ENCODE measurements at regions of chr5 and their contacts with region 1.

Region 1: DNA sequence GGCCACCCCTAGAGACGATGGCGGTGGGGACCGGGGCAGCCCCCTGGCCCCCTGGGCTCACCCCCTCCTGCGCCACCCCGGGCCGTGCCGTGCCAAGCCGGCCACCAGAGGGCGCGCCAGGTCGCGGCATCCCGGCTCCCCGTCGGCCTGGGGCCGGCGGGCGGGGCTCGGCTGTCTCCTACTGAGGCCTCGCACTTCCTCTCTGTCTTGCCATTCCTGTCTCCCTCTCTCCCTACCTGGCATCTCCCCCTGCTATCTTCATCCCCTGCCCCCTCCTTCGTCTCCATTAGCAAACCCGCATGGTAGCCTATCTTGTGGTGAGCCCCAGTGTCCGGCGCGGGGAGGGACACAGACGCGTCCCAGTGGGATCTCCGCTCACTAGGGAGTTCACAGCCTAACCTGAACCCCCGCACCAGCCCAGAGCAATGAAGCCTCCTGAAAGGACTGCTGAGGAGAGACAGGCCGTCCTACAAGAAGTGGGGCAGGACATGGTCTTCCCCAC is 29.8 kb upstream of the FABP6 start:
- DNase-seq: peak; percentile 53 to 77
- ATAC-seq: peak; percentile 94 to 99
- H3K4me3 ChIP-seq: peak overlapping the region; percentile 35
- H3K27ac ChIP-seq: peak overlapping the region; percentile 75 to 86
- H3K4me1 ChIP-seq: no peaks in the 10 kb centered on the region
- CTCF ChIP-seq: peak; percentile 98
- EP300 ChIP-seq: no peak
- POLR2A ChIP-seq: peak; percentile 12; the same call in 1 of the 2 replicates
- RAD21 ChIP-seq: peak; percentile 77 to 96

Region 2: GRCh38 chr5:160030631-160031377 is 168.7 kb before region 1 on chr5:
- CTCF ChIA-PET with region 1: no interaction called
- POLR2A ChIA-PET with region 1: no interaction called
- DNase-seq: no peak
- ATAC-seq: no peak
- H3K4me3 ChIP-seq: no peak overlapping the region
- H3K27ac ChIP-seq: no peak overlapping the region
- H3K4me1 ChIP-seq: no peaks in the 10 kb centered on the region
- CTCF ChIP-seq: no peak
- EP300 ChIP-seq: no peak
- POLR2A ChIP-seq: no peak
- RAD21 ChIP-seq: no peak

Region 3: GRCh38 chr5:160188142-160189015 is 11.1 kb before region 1 on chr5:
- CTCF ChIA-PET with region 1: interaction called, 25 read pairs
- POLR2A ChIA-PET with region 1: no interaction called
- DNase-seq: peak; percentile 27 to 31
- ATAC-seq: peak; percentile 55 to 78; a peak in 5 of 6 replicates
- H3K4me3 ChIP-seq: peak overlapping the region; percentile 24; the same call in 1 of the 3 replicates
- H3K27ac ChIP-seq: peak overlapping the region; percentile 71 to 85
- H3K4me1 ChIP-seq: no peaks in the 10 kb centered on the region
- CTCF ChIP-seq: no peak
- EP300 ChIP-seq: no peak
- POLR2A ChIP-seq: no peak
- RAD21 ChIP-seq: no peak

Region 4: GRCh38 chr5:160213537-160213936 is 14.1 kb after region 1 on chr5:
- CTCF ChIA-PET with region 1: interaction called, 11 read pairs
- POLR2A ChIA-PET with region 1: no interaction called
- DNase-seq: peak; percentile 13 to 48
- ATAC-seq: peak; percentile 73 to 90; a peak in 4 of 6 replicates
- H3K4me3 ChIP-seq: no peak overlapping the region
- H3K27ac ChIP-seq: no peak overlapping the region
- H3K4me1 ChIP-seq: no peaks in the 10 kb centered on the region
- CTCF ChIP-seq: no peak
- EP300 ChIP-seq: no peak
- POLR2A ChIP-seq: no peak
- RAD21 ChIP-seq: no peak

Region 5: GRCh38 chr5:160390787-160391696 is 191.6 kb after region 1 on chr5:
- CTCF ChIA-PET with region 1: interaction called, 11 read pairs
- POLR2A ChIA-PET with region 1: no interaction called
- DNase-seq: peak in 1 of 2 experiments; percentile 32
- ATAC-seq: peak; percentile 47 to 69; a peak in 3 of 6 replicates
- H3K4me3 ChIP-seq: no peak overlapping the region
- H3K27ac ChIP-seq: no peak overlapping the region
- H3K4me1 ChIP-seq: no peaks in the 10 kb centered on the region
- CTCF ChIP-seq: peak; percentile 75
- EP300 ChIP-seq: no peak
- POLR2A ChIP-seq: no peak
- RAD21 ChIP-seq: peak; percentile 73 to 79